ENCODE measurements at regions of chr1 and their contacts with region 1.

Region 1: GRCh38 chr1:33338440-33339211 is 17.7 kb upstream of the A3GALT2 start:
- DNase-seq: peak; percentile 75
- H3K4me3 ChIP-seq: no peak overlapping the region
- H3K27ac ChIP-seq: peak overlapping the region; percentile 63
- H3K4me1 ChIP-seq: peaks cover 95% of the 10 kb centered on the region
- H3K27me3 ChIP-seq: no peaks in the 10 kb centered on the region
- CTCF ChIP-seq: no peak

Region 2: GRCh38 chr1:33206340-33206739 is 132.3 kb before region 1 on chr1:
- CTCF ChIA-PET with region 1: no interaction called
- dilution Hi-C with region 1: no loop called
- in situ Hi-C with region 1: no loop called
- intact Hi-C with region 1: no loop called
- DNase-seq: no peak
- H3K4me3 ChIP-seq: no peak overlapping the region
- H3K27ac ChIP-seq: no peak overlapping the region
- H3K4me1 ChIP-seq: no peaks in the 10 kb centered on the region
- H3K27me3 ChIP-seq: peaks cover 1% of the 10 kb centered on the region
- CTCF ChIP-seq: no peak

Region 3: GRCh38 chr1:33349778-33350610 is 11.4 kb after region 1 on chr1:
- CTCF ChIA-PET with region 1: interaction called, 3 read pairs
- dilution Hi-C with region 1: no loop called
- in situ Hi-C with region 1: no loop called
- intact Hi-C with region 1: loop called (anchors 1 kb)
- DNase-seq: peak; percentile 72
- H3K4me3 ChIP-seq: peak overlapping the region; percentile 45 to 82 (median 73)
- H3K27ac ChIP-seq: peak overlapping the region; percentile 41
- H3K4me1 ChIP-seq: peaks cover 38% of the 10 kb centered on the region
- H3K27me3 ChIP-seq: no peaks in the 10 kb centered on the region
- CTCF ChIP-seq: no peak

Region 4: DNA sequence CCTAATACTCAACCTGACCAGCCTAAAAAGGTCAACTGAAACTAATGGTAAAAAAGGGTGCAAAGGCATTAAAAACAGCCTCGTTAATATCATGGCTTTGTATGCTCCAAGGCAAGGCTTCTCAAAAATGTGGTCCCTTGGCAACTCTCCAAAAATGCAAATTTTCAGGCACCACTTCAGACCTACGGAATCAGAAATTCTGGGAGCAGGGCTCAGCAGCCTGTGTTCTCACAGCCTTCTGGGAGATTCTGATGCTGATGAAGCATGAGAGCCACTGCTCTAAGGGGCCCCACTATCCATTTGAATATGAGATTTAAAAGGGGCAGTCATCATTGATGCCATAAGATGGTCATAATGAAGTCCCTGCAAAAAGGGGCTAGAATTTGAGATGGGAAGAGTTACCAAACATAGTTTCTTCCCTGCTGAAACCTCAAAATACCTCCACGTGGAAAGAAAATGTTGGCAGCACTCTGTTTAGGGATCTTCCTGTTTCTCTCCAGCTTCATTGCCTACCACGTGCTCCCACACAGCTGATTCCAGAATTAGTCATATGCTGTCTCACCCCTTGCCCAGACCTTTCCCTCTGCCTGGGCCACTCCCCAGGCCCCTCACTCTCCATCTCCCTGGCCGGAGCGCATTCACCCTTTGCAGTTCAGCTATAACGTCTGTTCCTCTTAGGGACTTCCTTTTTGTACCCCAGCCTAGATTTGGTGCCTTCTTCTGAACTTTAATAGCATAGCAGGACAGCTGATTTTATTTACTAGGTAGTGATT is 45.6 kb after region 1 on chr1:
- CTCF ChIA-PET with region 1: no interaction called
- dilution Hi-C with region 1: loop called (anchors 5 kb)
- in situ Hi-C with region 1: no loop called
- intact Hi-C with region 1: no loop called
- DNase-seq: peak; percentile 59
- H3K4me3 ChIP-seq: no peak overlapping the region
- H3K27ac ChIP-seq: no peak overlapping the region
- H3K4me1 ChIP-seq: peaks cover 27% of the 10 kb centered on the region
- H3K27me3 ChIP-seq: no peaks in the 10 kb centered on the region
- CTCF ChIP-seq: no peak

Region 5: DNA sequence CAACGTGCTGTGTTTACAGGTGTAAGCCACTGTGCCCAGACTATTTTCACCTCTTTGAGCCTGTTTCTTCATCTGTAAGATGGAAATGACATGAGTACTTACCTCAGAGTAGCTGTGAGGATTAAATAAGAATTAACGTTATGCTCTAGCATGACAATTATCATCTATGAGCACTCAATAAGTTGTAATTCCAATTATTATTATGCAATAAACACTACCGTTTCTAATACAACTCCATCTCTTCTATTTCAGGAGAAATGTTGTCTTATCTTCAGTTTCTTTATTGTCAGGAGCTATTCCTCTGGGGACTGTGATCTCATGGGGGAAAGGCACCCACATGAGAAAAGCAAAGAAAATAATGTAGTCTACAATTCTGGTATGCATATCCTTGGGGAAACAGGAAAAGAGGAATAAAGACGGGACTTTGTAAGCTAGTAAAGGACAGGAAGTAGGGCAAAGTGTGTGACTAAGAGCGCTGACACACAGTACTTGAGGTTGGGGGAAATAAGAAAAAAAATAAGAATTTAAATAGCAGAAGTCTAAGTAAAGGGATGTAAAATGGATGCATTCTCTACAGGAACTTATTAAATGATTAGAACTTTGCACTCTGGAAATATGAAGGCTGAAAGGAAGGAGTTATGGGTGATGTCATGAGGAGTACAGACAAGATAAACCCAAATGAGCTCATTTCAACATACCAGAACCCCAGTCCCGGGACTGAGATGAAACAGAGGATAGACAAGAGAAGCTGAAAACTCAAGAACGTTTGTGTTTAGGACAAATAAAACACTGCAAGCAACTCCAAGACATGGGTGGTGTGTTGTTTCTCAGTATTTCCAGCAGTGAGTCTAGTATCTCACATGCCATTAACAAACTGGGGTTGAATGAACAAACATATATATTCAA is 82.5 kb after region 1 on chr1:
- CTCF ChIA-PET with region 1: no interaction called
- dilution Hi-C with region 1: loop called (anchors 5 kb)
- in situ Hi-C with region 1: no loop called
- intact Hi-C with region 1: no loop called
- DNase-seq: no peak
- H3K4me3 ChIP-seq: no peak overlapping the region
- H3K27ac ChIP-seq: no peak overlapping the region
- H3K4me1 ChIP-seq: peaks cover 17% of the 10 kb centered on the region
- H3K27me3 ChIP-seq: no peaks in the 10 kb centered on the region
- CTCF ChIP-seq: no peak

Region 6: DNA sequence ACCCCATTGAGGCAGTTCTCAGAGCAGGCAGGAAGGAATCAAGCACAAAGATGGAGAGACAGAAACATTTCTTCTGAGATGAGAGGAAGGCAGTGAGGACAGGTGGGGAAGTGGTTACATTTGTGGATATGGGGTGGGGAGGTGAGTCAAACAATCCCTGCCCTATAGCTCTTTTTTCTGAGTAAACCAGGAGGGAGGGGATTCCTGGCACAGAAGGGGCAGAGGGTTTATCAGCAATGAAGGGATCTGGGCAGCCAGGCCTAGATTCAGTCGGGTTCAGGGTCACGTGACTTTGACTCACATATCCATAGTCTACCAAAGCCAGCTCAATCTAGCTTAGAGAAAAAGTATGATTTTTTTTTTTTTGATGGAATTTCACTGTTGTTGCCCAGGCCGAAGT is 108.0 kb after region 1 on chr1:
- CTCF ChIA-PET with region 1: no interaction called
- dilution Hi-C with region 1: loop called (anchors 5 kb)
- in situ Hi-C with region 1: no loop called
- intact Hi-C with region 1: no loop called
- DNase-seq: no peak
- H3K4me3 ChIP-seq: no peak overlapping the region
- H3K27ac ChIP-seq: no peak overlapping the region
- H3K4me1 ChIP-seq: peaks cover 23% of the 10 kb centered on the region
- H3K27me3 ChIP-seq: no peaks in the 10 kb centered on the region
- CTCF ChIP-seq: no peak